HCT116 (cell line): ENCODE measurements at regions of chr6 and their contacts with region 1.

Region 1: GRCh38 chr6:33271458-33272274 is at the starts of genes RPS18 and VPS52:
- DNase-seq: peak; percentile 99
- ATAC-seq: peak; percentile 76
- H3K4me3 ChIP-seq: peak within 1 kb of the TSS; percentile 75 to 99
- H3K27ac ChIP-seq: peak within 1 kb of the TSS; percentile 82
- H3K4me1 ChIP-seq: peaks cover 32 to 47% of the 10 kb centered on the region in 2 experiments
- H3K27me3 ChIP-seq: no peaks in the 10 kb centered on the region
- CTCF ChIP-seq: no peak
- POLR2A ChIP-seq: peak; percentile 98
- RAD21 ChIP-seq: no peak
- total RNA-seq, gene RPS18: 4,062 TPM
- total RNA-seq, gene VPS52: 58.2 TPM

Region 2: GRCh38 chr6:33288921-33289748 is 17.5 kb after region 1 on chr6 and contains the starts of genes PFDN6 and WDR46:
- CTCF ChIA-PET with region 1: interaction called, 7 read pairs
- POLR2A ChIA-PET with region 1: interaction called, 10 read pairs
- RAD21 ChIA-PET with region 1: no interaction called
- intact Hi-C with region 1: no loop called
- DNase-seq: peak; percentile 83
- ATAC-seq: peak; percentile 94
- H3K4me3 ChIP-seq: peak within 1 kb of the TSS; percentile 97
- H3K27ac ChIP-seq: peak within 1 kb of the TSS; percentile 67
- H3K4me1 ChIP-seq: peaks cover 10 to 15% of the 10 kb centered on the region in 2 experiments
- H3K27me3 ChIP-seq: no peaks in the 10 kb centered on the region
- CTCF ChIP-seq: no peak
- POLR2A ChIP-seq: peak; percentile 59
- RAD21 ChIP-seq: no peak
- total RNA-seq, gene PFDN6: 90.5 TPM
- total RNA-seq, gene WDR46: 90.6 TPM

Region 3: DNA sequence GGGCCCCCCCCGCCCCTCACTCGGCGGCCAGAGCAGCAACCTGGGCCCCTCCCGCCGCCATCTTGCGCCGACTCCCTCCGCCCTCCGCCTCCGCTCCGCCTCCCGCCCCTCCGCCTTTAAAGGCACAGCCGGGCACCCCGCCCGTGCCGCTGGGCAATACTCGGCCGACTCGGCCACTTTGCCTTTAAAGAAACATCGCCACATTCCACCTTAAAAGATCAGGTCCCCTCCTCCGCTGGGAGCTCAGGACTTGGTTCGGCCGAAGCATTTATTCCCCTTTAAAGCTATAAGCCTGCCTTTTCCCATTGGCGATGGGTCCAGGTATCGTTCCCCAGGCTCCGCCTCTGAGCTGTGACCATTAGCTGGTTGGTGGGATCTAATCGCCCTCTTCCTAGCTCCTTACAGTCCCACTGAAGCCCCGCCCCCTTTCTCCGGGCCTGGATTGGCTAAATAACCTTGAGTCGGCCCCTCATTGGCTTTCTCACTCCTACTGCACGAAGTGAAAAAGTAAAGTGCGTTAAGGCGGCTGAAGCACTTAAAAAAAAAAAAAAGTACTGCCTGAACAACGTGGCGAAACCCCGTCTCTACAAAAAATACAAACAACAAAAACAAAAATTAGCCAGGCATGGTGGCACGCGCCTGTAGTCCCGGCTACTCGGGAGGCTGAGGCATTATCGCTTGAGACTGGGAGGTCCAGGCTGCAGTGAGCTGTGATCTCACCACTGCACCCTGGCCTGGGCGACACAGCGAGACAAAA is 46.2 kb after region 1 on chr6 and contains the start of gene ZBTB22:
- CTCF ChIA-PET with region 1: interaction called, 4 read pairs
- POLR2A ChIA-PET with region 1: interaction called, 11 read pairs
- RAD21 ChIA-PET with region 1: no interaction called
- intact Hi-C with region 1: no loop called
- DNase-seq: peak; percentile 98
- ATAC-seq: peak; percentile 82
- H3K4me3 ChIP-seq: peak within 1 kb of the TSS; percentile 55 to 63
- H3K27ac ChIP-seq: peak within 1 kb of the TSS; percentile 68
- H3K4me1 ChIP-seq: peaks cover 36 to 66% of the 10 kb centered on the region in 2 experiments
- H3K27me3 ChIP-seq: no peaks in the 10 kb centered on the region
- CTCF ChIP-seq: no peak
- POLR2A ChIP-seq: no peak
- RAD21 ChIP-seq: no peak
- total RNA-seq, gene ZBTB22: 11.7 TPM